Gastrocnemius medialis (tissue), 4 donors: ENCODE measurements at regions of chr11 and their contacts with region 1.

Region 1: GRCh38 chr11:113532697-113533424 is 57.7 kb upstream of the DRD2 start:
- DNase-seq: peak; percentile 35 to 48
- ATAC-seq: peak; percentile 76 to 78
- H3K4me3 ChIP-seq: no peak overlapping the region
- H3K27ac ChIP-seq: no peak overlapping the region
- H3K4me1 ChIP-seq: peaks cover 5 to 7% of the 10 kb centered on the region in 2 donors
- H3K27me3 ChIP-seq: no peaks in the 10 kb centered on the region
- CTCF ChIP-seq: peak; percentile 55 to 87 (median 66)
- POLR2A ChIP-seq: no peak

Region 2: DNA sequence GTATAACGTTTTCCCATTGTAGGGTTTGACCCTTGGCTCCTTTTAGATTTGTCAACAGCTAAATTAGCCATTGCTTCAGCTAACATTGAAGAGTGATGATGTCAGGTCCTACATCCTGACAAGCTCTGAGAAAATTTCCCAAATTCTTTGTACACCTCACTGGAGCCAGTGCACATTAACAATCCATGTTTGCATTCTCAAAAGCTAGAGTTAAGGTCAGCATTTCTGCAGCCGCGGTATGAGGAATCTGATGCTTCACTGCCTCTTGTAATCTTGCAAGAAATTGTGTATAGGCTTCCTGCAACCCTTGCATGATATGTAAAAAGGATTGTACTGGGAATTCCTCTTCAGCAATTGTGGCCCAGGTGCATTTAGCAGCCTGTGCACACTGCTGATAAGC is 604.7 kb before region 1 on chr11:
- in situ Hi-C with region 1: no loop called
- intact Hi-C with region 1: no loop called
- DNase-seq: no peak
- ATAC-seq: no peak
- H3K4me3 ChIP-seq: no peak overlapping the region
- H3K27ac ChIP-seq: no peak overlapping the region
- H3K4me1 ChIP-seq: no peaks in the 10 kb centered on the region
- H3K27me3 ChIP-seq: no peaks in the 10 kb centered on the region
- CTCF ChIP-seq: no peak
- POLR2A ChIP-seq: no peak

Region 3: DNA sequence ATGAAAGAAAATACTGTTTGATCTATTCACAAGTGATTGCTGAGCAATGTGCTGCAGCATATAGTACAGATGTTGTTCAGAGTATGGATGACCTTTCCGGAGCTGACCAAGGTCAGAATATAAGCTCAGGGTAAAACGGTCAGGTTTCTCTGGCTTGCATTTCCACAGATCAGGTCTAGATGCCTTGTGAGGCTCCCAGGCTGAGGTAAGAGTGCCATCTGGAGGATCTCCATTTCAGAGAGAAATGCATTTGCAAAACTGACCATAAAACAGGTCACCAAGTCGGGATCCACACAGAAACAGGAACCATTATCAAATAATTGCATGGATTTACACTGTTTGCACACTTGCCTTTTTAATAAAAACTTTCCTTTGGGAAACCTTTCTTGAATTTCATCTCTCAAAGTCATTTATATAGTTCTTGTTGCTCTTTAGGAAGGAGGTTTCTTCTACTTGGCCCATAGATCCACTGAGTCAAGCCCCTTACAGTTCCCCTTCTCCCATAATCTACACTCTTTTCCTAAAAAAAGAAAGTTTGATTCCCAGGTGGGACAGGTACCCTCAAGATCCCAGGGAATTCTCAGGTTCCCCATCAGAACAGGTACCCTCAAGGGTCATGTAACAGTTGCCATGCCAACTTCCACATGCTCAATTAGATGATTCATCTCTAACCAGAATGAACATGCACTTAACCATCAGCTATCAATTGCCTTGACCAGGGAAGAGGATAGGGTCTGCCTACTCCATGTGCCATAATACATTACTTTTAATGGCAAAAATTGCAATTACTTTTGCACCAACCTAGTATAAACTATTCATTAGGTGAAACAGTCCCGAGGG is 198.2 kb after region 1 on chr11:
- in situ Hi-C with region 1: loop called (anchors 25 kb)
- intact Hi-C with region 1: loop called (anchors 10 kb)
- DNase-seq: peak; percentile 17 to 64
- ATAC-seq: peak; percentile 81 to 97
- H3K4me3 ChIP-seq: no peak overlapping the region
- H3K27ac ChIP-seq: no peak overlapping the region
- H3K4me1 ChIP-seq: peaks cover 5 to 14% of the 10 kb centered on the region in 2 donors
- H3K27me3 ChIP-seq: no peaks in the 10 kb centered on the region
- CTCF ChIP-seq: peak; percentile 41 to 79 (median 71)
- POLR2A ChIP-seq: no peak

Region 4: GRCh38 chr11:113796663-113797259 is 263.9 kb after region 1 on chr11:
- in situ Hi-C with region 1: no loop called
- intact Hi-C with region 1: loop called (anchors 5 kb)
- DNase-seq: no peak
- ATAC-seq: peak; percentile 96 to 99
- H3K4me3 ChIP-seq: no peak overlapping the region
- H3K27ac ChIP-seq: peak overlapping the region in 2 of 4 donors; percentile 21 to 48
- H3K4me1 ChIP-seq: peaks cover 0 to 5% of the 10 kb centered on the region in 2 donors
- H3K27me3 ChIP-seq: no peaks in the 10 kb centered on the region
- CTCF ChIP-seq: peak; percentile 57 to 75 (median 65)
- POLR2A ChIP-seq: no peak